ENCODE measurements at regions of chr2 and their contacts with region 1.

Region 1: DNA sequence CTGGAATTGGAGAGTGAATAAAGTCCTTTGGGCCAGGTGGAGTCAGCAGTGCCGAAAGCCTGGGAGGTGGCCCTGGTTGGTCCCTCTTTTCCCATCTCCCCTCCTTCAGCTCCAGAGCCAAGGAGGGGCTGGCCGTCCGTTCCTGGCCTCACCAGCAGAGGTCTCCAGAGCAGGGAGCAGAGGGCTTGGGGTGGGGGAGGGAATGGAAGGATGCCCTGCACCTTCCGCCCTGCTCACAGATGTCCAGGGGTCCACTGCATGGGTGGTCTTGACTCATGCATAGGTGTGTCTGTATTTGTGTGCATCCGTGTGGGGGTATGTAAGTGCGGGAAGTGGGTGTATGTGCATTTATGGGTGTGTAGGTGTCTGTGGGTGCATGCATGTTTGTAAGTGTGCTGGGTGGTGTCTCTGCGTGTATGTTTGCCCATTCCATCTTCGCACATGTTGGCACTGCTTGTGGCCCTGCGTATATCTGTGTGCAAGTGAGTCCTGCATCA is 201.8 kb downstream of the ZFP36L2 start:
- DNase-seq: peak; percentile 96
- H3K4me3 ChIP-seq: no peak overlapping the region
- H3K27ac ChIP-seq: peak overlapping the region in 1 of 2 experiments; percentile 52; a peak in 1 of 4 replicates
- H3K4me1 ChIP-seq: peaks cover 0 to 14% of the 10 kb centered on the region in 2 experiments; a peak in 1 of 4 replicates
- H3K27me3 ChIP-seq: no peaks in the 10 kb centered on the region
- CTCF ChIP-seq: peak; percentile 97
- EP300 ChIP-seq: peak in 1 of 2 experiments; percentile 33; a peak in 1 of 4 replicates
- RAD21 ChIP-seq: peak; percentile 97

Region 2: GRCh38 chr2:43005245-43005974 is 19.2 kb before region 1 on chr2:
- CTCF ChIA-PET with region 1: interaction called, 20 read pairs
- POLR2A ChIA-PET with region 1: no interaction called
- DNase-seq: peak; percentile 34
- H3K4me3 ChIP-seq: no peak overlapping the region
- H3K27ac ChIP-seq: no peak overlapping the region
- H3K4me1 ChIP-seq: peaks cover 0 to 6% of the 10 kb centered on the region in 2 experiments; a peak in 1 of 4 replicates
- H3K27me3 ChIP-seq: no peaks in the 10 kb centered on the region
- CTCF ChIP-seq: no peak
- EP300 ChIP-seq: no peak
- RAD21 ChIP-seq: no peak

Region 3: GRCh38 chr2:43038039-43038707 is 13.6 kb after region 1 on chr2:
- CTCF ChIA-PET with region 1: interaction called, 21 read pairs
- POLR2A ChIA-PET with region 1: no interaction called
- DNase-seq: peak; percentile 90
- H3K4me3 ChIP-seq: no peak overlapping the region
- H3K27ac ChIP-seq: peak overlapping the region; percentile 56 to 73; a peak in 3 of 4 replicates
- H3K4me1 ChIP-seq: peaks cover 28 to 37% of the 10 kb centered on the region in 2 experiments; a peak in 3 of 4 replicates
- H3K27me3 ChIP-seq: no peaks in the 10 kb centered on the region
- CTCF ChIP-seq: no peak
- EP300 ChIP-seq: peak; percentile 87 to 89; a peak in 3 of 4 replicates
- RAD21 ChIP-seq: peak; percentile 27; the same call in 1 of the 2 replicates

Region 4: DNA sequence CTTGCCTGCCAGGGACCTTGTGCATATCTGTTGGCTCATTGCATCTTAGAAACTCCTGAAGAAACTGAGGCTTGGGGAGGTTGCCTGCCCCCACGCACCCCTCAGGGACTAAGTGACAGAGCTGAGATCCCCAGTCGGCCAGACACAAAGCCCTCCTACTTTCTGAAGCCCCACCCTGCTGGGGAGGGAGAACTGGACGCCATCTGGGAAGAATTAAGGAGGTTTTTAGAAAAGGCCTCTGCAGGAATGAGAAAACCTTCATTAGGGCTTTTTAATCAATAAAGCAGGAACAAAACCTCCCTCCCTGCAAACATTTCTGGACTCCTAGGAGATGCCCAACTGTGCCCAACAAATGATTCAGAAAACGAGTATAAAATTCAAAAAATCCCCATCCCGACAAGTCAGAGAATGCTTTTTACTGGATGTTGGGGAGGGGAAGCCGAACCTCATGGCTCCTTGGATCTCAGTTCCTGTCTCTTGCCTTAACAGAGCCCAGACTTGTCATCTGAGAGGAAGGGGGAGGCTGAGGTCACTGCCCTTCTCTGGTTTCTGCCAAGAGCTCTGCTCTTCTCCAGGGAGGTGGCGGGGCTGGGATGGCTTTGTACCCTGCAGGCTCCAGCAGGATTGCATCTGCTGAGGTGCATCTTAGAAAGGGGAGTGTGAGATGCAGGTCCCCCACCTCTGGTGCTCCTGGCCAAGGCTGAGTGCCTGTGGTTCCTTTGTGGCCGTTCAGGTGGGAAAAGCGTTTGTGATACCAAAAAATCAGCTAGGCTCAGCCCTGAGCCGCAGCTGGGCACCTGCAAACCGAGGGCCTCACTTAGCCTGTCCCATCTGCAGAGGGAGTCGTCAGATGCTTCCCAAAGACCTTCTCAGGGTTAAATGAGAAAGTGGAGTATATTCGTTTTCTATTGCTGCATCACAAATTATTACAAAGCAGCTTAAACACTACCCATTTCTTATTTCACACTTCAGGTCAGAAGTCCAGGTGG is 59.4 kb after region 1 on chr2:
- CTCF ChIA-PET with region 1: interaction called, 21 read pairs
- POLR2A ChIA-PET with region 1: no interaction called
- DNase-seq: peak; percentile 75
- H3K4me3 ChIP-seq: 0 out of 4 replicates have a peak overlapping the region, but pooled peaks of 1 of the 2 experiments have one; percentile 7
- H3K27ac ChIP-seq: peak overlapping the region; percentile 89 to 98
- H3K4me1 ChIP-seq: peaks cover 58 to 67% of the 10 kb centered on the region in 2 experiments
- H3K27me3 ChIP-seq: no peaks in the 10 kb centered on the region
- CTCF ChIP-seq: no peak
- EP300 ChIP-seq: peak in 1 of 2 experiments; percentile 62; a peak in 2 of 4 replicates
- RAD21 ChIP-seq: no peak; the same call in 1 of the 2 replicates

Region 5: DNA sequence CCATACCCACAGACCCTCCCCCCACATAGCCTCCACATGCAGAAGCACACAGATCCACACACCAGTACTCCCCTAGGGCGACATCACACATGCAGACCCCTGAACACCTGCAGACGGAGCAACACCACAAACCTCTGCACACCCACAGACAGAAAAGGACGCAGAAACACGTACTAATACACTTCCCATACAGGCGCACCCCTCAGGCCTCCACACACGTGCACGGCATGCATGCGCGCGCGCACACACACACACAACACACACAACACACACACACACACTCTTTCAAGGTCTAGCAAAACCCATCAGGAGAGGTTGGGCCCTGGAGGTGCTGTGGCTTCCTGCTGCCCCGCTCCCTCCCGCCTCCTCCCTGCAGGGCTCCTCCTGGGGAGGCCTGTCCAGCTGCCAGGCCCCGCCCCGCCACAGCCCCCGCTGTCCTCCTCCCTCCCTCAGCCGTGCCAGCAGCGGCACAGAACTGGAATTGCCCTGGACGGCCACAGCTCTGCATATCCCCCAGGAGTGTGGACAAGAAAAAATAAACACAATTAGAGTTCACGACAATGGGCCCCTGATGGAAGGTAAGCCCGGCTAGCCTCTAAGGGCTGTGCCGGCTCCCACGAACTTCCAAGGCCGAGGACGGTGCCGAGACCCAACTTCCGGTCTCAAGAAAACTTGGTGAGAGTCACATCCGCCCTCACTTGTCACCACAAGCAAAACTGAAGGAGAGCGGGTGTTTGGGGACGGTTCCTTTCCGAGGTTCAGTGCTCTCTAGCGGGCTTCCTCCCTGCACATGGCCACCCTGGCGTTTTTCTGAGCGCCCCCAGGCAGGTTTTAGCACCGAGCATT is 195.0 kb after region 1 on chr2:
- CTCF ChIA-PET with region 1: interaction called, 23 read pairs
- POLR2A ChIA-PET with region 1: interaction called, 9 read pairs
- DNase-seq: peak; percentile 87
- H3K4me3 ChIP-seq: peak overlapping the region; percentile 95 to 97
- H3K27ac ChIP-seq: peak overlapping the region; percentile 94 to 95
- H3K4me1 ChIP-seq: peaks cover 46 to 69% of the 10 kb centered on the region in 2 experiments; a peak in 3 of 4 replicates
- H3K27me3 ChIP-seq: no peaks in the 10 kb centered on the region
- CTCF ChIP-seq: no peak
- EP300 ChIP-seq: peak; percentile 13 to 47; a peak in 1 of 4 replicates
- RAD21 ChIP-seq: peak; percentile 42

Region 6: GRCh38 chr2:43513216-43513615 is 488.7 kb after region 1 on chr2:
- CTCF ChIA-PET with region 1: no interaction called
- POLR2A ChIA-PET with region 1: no interaction called
- DNase-seq: no peak
- H3K4me3 ChIP-seq: no peak overlapping the region
- H3K27ac ChIP-seq: peak overlapping the region in 1 of 2 experiments; percentile 17; a peak in 1 of 4 replicates
- H3K4me1 ChIP-seq: peaks cover under 1 to 15% of the 10 kb centered on the region in 2 experiments; a peak in 3 of 4 replicates
- H3K27me3 ChIP-seq: no peaks in the 10 kb centered on the region
- CTCF ChIP-seq: no peak
- EP300 ChIP-seq: no peak
- RAD21 ChIP-seq: no peak

Measured in SK-N-SH (cell line).